Posterior vena cava (tissue), 2 donors: ENCODE measurements at regions of chr13 and their contacts with region 1.

Region 1: DNA sequence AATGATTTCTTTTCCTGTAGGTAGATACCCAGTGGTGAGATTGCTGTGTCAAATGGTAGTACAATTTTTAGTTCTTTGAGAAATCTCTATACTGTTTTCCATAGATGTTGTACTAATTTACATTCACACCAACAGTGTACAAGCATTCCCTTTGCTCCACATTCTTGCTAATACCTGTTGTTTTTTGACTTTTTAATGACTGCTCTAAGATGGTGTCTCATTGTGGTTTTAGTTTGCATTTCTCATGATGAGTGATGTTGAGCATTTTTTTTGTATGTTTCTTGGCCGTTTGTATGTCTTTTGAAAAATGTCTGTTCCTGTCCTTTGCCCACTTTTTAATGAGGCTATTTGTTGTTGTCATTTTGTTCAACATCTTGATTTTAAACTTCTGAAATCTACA is 103.3 kb downstream of the DGKH start:
- DNase-seq: no peak

Region 2: GRCh38 chr13:42125046-42125445 is 26.7 kb before region 1 on chr13:
- intact Hi-C with region 1: loop called in 1 of 2 experiments (anchors 2 kb)
- DNase-seq: no peak